ENCODE measurements at regions of chr22 and their contacts with region 1.

Region 1: DNA sequence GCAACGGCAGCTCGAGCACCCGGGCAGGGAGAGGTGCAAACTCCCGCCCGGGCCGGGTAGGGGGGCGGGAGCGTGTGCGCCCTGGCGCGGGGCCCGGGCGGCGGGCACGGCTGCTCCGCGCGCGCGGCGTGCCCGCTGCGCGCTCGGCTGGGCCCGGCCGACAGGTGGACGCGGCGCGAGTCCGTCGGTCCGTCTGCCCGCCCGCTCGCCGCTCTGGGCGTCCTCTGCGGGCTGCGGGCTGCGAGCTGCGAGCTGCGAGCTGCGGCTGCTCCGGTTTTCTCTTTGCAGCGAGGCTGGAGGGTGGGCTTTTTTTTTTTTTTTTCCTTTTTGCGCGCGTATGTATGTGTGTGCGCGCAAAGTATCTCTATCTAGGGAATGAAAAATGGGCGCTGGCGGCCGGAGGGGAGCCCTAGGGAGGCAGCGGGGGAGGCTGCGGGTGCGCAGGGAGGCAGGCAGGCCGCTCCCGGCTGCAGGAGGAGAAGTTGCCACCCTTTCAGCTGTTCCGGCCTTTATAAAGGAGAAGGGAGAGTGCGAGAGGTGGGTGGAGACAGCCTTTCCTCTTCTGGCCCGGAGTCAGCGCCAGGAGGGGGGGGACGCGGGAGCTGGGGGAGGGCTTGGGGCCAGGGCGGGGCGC is at the start of gene PDGFB:
- DNase-seq: peak in 2 of 3 donors; percentile 26 to 39
- H3K4me3 ChIP-seq: peak within 1 kb of the TSS; percentile 13 to 70 (median 15)
- H3K4me3 Mint-ChIP-seq: peak within 1 kb of the TSS; percentile 71 to 90
- H3K27ac ChIP-seq: no peak within 1 kb of the TSS
- H3K27ac Mint-ChIP-seq: no peak within 1 kb of the TSS
- H3K4me1 ChIP-seq: peaks cover 30 to 46% of the 10 kb centered on the region in 2 donors
- H3K4me1 Mint-ChIP-seq: peaks cover 34% of the 10 kb centered on the region
- H3K27me3 ChIP-seq: peaks cover 41 to 87% of the 10 kb centered on the region in 2 donors
- H3K27me3 Mint-ChIP-seq: peaks cover 66 to 94% (median 88%) of the 10 kb centered on the region in 3 donors
- CTCF ChIP-seq: no peak
- polyA plus RNA-seq, gene PDGFB: 0.15 TPM in 1 of 3 donors, not detected in the others

Region 2: DNA sequence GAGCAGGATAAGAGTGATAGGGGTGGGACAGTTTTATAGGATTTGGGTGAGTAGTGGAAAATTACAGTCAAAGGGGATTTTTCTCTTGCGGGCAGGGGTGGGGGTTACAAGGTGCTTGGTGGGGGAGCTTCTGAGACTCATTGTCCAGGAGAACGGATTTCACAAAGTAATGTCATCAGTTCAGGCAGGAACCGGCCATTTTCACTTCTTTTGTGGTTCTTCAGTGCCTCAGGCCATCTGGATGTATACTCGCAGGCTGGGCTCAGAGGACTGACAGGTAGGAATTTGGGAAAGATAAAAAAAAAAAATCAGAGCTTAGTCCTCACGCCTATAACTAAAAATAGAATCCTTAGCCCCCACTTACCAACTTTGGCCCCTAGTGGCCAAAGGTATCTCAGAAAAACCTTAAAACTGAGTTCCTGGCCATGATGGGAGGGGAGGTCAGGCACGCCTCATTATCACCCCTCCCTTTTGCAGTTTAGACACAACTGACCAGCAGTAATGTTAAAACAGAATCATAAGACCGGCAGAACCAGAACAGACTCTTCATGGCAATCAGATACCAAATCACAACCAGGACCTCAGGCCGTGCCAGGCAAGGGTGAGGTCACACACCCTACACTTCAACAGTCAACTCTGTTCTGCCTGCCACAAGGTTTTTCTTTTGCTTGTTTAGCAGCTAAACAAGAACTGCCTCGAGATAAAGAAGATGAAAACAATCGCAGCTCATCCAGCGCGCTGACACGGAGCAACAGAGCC is 176.4 kb before region 1 on chr22:
- intact Hi-C with region 1: no loop called
- DNase-seq: no peak
- H3K4me3 ChIP-seq: no peak overlapping the region
- H3K4me3 Mint-ChIP-seq: no peak overlapping the region
- H3K27ac ChIP-seq: no peak overlapping the region
- H3K27ac Mint-ChIP-seq: peak overlapping the region in 1 of 7 donors; percentile 27
- H3K4me1 ChIP-seq: peaks cover 19 to 25% of the 10 kb centered on the region in 2 donors
- H3K4me1 Mint-ChIP-seq: peaks cover 14% of the 10 kb centered on the region
- H3K27me3 ChIP-seq: no peaks in the 10 kb centered on the region
- H3K27me3 Mint-ChIP-seq: peaks cover 0 to 4% (median 4%) of the 10 kb centered on the region in 3 donors
- CTCF ChIP-seq: no peak

Region 3: GRCh38 chr22:39205338-39206021 is 39.1 kb before region 1 on chr22:
- intact Hi-C with region 1: loop called in 1 of 2 experiments (anchors 5 kb)
- DNase-seq: peak in 2 of 3 donors; percentile 10 to 43
- H3K4me3 ChIP-seq: no peak overlapping the region
- H3K4me3 Mint-ChIP-seq: no peak overlapping the region
- H3K27ac ChIP-seq: no peak overlapping the region
- H3K27ac Mint-ChIP-seq: peak overlapping the region in 1 of 7 donors; percentile 8
- H3K4me1 ChIP-seq: no peaks in the 10 kb centered on the region
- H3K4me1 Mint-ChIP-seq: no peaks in the 10 kb centered on the region
- H3K27me3 ChIP-seq: no peaks in the 10 kb centered on the region
- H3K27me3 Mint-ChIP-seq: peaks cover 8 to 34% (median 20%) of the 10 kb centered on the region in 3 donors
- CTCF ChIP-seq: no peak

Region 4: GRCh38 chr22:40499187-40499753 is 1254.7 kb after region 1 on chr22:
- intact Hi-C with region 1: no loop called
- DNase-seq: peak; percentile 72 to 91 (median 85)
- H3K4me3 ChIP-seq: no peak overlapping the region
- H3K4me3 Mint-ChIP-seq: no peak overlapping the region
- H3K27ac ChIP-seq: peak overlapping the region in 1 of 2 donors; percentile 72
- H3K27ac Mint-ChIP-seq: peak overlapping the region; percentile 66 to 91 (median 82)
- H3K4me1 ChIP-seq: peaks cover 10 to 12% of the 10 kb centered on the region in 2 donors
- H3K4me1 Mint-ChIP-seq: peaks cover 13% of the 10 kb centered on the region
- H3K27me3 ChIP-seq: no peaks in the 10 kb centered on the region
- H3K27me3 Mint-ChIP-seq: peaks cover 0 to 2% (median 0%) of the 10 kb centered on the region in 3 donors
- CTCF ChIP-seq: no peak

Measured in CD14-positive monocyte (primary cell).